ENCODE measurements at regions of chr9 and their contacts with region 1.

Region 1: GRCh38 chr9:126965541-126966428 is 51.2 kb downstream of the RALGPS1 start:
- ATAC-seq: peak in 5 of 8 experiments; percentile 43 to 96 (median 83)
- H3K4me3 ChIP-seq: no peak overlapping the region
- H3K27ac ChIP-seq: no peak overlapping the region
- H3K4me1 ChIP-seq: no peaks in the 10 kb centered on the region

Region 2: GRCh38 chr9:127122176-127123063 is 156.6 kb after region 1 on chr9 and contains the start of gene ANGPTL2:
- in situ Hi-C with region 1: loop called in 1 of 9 experiments (anchors 25 kb)
- ATAC-seq: peak; percentile 81 to 94 (median 92)
- H3K4me3 ChIP-seq: peak within 1 kb of the TSS; percentile 3 to 29 (median 24)
- H3K27ac ChIP-seq: peak within 1 kb of the TSS in 1 of 2 donors; percentile 22
- H3K4me1 ChIP-seq: peaks cover 22 to 29% of the 10 kb centered on the region in 2 donors
- total RNA-seq, gene ANGPTL2: 1.1 to 42.1 (median 4.8) TPM

Measured in motor neuron (in vitro differentiated cells).